Panc1 (cell line): ENCODE measurements at regions of chr7 and their contacts with region 1.

Region 1: DNA sequence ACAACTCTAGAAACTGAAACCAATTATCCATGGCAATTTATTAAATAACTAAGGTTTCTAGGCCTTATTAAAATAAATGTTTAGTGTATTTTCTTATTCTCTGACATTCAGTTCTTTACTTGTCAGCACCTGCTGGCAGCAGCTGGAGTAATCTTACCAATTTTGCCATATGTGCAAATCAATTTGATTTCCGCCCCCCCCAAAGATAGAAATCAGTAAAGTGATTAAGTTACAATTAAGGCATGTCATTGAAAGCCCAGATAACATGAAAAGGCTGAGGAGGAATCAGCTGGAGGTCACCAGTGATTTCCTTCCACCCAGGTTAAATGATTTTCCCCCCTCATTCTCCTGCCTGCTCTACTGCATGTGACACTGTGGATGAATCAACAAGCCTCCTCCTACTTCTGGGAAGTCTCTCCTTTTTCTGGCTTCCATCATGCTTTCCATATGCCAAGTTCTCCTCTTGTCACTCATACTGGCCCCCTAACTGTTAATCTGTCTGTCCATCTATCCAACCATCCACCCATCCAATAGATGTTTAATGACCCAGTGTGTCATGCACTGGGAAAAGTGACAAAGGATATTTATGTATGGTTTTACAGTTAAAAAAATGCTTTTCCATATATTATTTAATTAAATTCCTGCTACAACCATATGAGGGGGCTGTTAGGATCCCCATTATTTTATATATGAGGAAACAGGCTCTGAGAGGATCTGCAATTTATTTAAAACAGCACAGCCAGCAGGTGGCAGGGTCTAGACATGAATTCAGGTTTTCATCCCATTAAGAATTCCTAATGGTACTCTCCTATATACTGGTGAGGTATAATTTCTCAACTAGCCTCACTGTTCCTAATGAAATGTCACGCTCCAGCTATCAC is 116.5 kb downstream of the ATXN7L1 start:
- DNase-seq: no peak
- ATAC-seq: peak; percentile 82
- H3K4me3 ChIP-seq: no peak overlapping the region
- H3K27ac ChIP-seq: no peak overlapping the region
- H3K4me1 ChIP-seq: no peaks in the 10 kb centered on the region
- H3K27me3 ChIP-seq: no peaks in the 10 kb centered on the region
- CTCF ChIP-seq: peak; percentile 75

Region 2: GRCh38 chr7:105149827-105150226 is 610.1 kb before region 1 on chr7:
- CTCF ChIA-PET with region 1: no interaction called
- POLR2A ChIA-PET with region 1: no interaction called
- in situ Hi-C with region 1: no loop called
- intact Hi-C with region 1: no loop called
- DNase-seq: peak; percentile 86
- ATAC-seq: no peak
- H3K4me3 ChIP-seq: no peak overlapping the region
- H3K27ac ChIP-seq: no peak overlapping the region
- H3K4me1 ChIP-seq: no peaks in the 10 kb centered on the region
- H3K27me3 ChIP-seq: no peaks in the 10 kb centered on the region
- CTCF ChIP-seq: no peak

Region 3: DNA sequence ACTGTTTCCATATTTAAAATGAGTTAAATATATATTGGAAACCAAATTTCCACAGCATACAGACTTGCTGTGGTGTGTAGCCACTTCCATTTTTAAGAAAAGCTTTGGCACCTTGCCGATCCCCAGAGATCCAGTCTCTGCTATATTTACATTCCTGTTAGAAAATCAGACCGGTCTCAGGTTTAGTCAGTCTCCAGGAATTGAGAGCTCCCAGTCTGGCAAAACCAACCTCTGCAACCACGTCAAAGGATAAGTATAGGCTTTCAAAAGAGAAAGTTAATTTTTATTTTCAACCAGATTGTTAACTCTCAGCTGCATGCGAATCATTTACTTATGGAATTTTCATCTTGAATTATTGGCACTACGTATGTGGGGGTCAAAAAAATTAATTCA is 266.0 kb before region 1 on chr7:
- CTCF ChIA-PET with region 1: no interaction called
- POLR2A ChIA-PET with region 1: no interaction called
- in situ Hi-C with region 1: no loop called
- intact Hi-C with region 1: no loop called
- DNase-seq: no peak
- ATAC-seq: no peak; the same call in 1 of the 2 replicates
- H3K4me3 ChIP-seq: no peak overlapping the region
- H3K27ac ChIP-seq: no peak overlapping the region
- H3K4me1 ChIP-seq: no peaks in the 10 kb centered on the region
- H3K27me3 ChIP-seq: no peaks in the 10 kb centered on the region
- CTCF ChIP-seq: no peak

Region 4: DNA sequence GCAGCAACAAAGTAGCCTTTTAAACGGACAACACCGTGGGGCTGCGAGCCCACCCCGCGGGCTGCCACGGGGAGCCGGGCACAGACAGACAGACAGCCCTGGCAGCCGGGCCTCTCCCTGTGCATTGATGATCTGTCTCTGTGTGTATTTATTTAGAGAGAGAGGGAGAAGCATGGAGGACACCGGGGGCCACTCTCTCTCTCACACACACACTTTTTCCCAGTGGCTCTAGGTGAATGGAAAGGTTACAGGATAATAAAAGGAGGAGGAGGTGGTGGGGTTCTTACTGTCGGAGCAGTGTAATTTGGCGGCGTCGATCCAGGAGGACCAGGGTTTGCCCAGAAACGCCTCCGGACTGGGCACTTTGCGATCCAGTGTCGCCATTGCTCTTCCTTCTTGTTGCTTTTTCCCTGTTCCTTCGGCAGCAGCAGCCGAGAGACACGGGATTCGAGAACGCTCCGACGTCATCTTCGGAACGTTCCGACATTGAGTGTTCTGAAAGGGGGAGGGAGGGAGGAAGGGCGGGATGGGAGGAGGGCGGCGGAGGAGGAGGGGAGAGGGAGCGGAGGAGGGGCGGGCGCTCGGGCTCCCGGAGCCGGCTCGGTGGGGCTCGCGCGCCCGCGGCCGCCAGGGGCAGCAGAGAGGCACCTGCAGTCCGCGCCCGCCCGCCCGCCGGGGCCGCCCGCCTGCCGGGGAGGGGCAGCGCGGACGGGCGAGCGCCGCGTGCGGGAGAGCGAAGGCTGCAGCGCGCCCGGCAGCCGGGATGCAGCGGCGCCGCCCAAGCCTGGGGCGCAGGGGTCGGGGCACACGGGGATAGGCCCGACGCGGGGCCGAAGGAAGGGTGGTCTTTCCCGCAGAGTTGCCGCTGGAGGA is 116.4 kb after region 1 on chr7 and contains the start of gene ATXN7L1:
- CTCF ChIA-PET with region 1: interaction called, 3 read pairs
- POLR2A ChIA-PET with region 1: no interaction called
- in situ Hi-C with region 1: no loop called
- intact Hi-C with region 1: loop called (anchors 10 kb)
- DNase-seq: peak; percentile 88
- ATAC-seq: peak; percentile 92
- H3K4me3 ChIP-seq: peak within 1 kb of the TSS; percentile 88 to 98
- H3K27ac ChIP-seq: peak within 1 kb of the TSS; percentile 91
- H3K4me1 ChIP-seq: peaks cover 27% of the 10 kb centered on the region
- H3K27me3 ChIP-seq: no peaks in the 10 kb centered on the region
- CTCF ChIP-seq: peak; percentile 98
- total RNA-seq, gene ATXN7L1: 10.8 TPM

Region 5: DNA sequence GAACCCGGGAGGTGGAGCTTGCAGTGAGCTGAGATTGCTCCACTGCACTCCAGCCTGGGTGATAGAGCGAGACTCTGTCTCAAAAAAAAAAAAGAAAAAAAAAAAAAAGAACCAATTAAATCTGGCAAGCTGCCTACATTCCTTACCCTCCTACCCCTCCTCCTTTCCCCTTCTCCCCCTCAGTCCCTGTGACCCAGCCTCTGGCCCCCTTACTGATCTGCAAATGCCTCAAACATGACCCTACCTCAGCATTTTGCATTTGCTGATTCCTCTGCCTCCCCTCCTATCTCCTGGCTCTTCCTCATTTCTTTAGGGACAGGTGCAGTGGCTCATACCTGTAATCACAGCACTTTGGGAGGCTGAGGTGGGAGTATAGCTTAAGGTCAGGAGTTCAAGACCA is 222.5 kb after region 1 on chr7:
- CTCF ChIA-PET with region 1: interaction called, 10 read pairs
- POLR2A ChIA-PET with region 1: no interaction called
- in situ Hi-C with region 1: no loop called
- intact Hi-C with region 1: no loop called
- DNase-seq: no peak
- ATAC-seq: no peak
- H3K4me3 ChIP-seq: no peak overlapping the region
- H3K27ac ChIP-seq: no peak overlapping the region
- H3K4me1 ChIP-seq: no peaks in the 10 kb centered on the region
- H3K27me3 ChIP-seq: peaks cover 4% of the 10 kb centered on the region
- CTCF ChIP-seq: no peak

Region 6: GRCh38 chr7:106009403-106010226 is 249.7 kb after region 1 on chr7:
- CTCF ChIA-PET with region 1: interaction called, 3 read pairs
- POLR2A ChIA-PET with region 1: no interaction called
- in situ Hi-C with region 1: no loop called
- intact Hi-C with region 1: loop called (anchors 1 kb)
- DNase-seq: peak; percentile 35
- ATAC-seq: peak; percentile 98
- H3K4me3 ChIP-seq: peak overlapping the region in 1 of 2 experiments; percentile 19; a peak in 2 of 4 replicates
- H3K27ac ChIP-seq: no peak overlapping the region
- H3K4me1 ChIP-seq: no peaks in the 10 kb centered on the region
- H3K27me3 ChIP-seq: no peaks in the 10 kb centered on the region
- CTCF ChIP-seq: peak; percentile 97

Region 7: DNA sequence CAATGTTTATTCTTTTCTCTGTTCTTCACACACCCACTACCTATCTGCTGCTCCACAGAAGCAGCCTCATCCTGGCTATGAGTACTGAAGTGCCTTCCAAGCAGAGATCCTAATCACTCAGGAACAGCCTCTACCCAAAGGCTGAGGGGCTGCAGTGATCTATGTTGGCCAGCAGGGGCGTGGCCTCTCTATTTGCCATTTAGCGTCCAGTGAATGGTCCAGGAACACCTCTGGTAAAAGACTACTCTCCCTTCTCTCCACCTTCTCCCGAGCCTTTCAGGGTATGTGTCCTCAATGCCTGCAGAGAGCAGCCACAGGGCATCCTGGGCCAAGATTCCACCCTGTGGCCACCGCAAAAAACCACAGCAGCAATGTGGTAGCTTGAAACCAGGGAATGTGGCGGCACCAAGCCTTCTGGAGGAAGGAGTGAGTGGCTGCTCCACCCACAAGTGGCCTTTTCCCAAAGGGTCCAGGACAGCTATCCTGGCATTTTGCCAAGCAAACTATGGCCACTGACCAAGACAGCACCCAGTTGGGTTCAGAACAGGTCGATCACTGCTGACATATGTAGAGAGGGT is 281.3 kb after region 1 on chr7:
- CTCF ChIA-PET with region 1: interaction called, 5 read pairs
- POLR2A ChIA-PET with region 1: no interaction called
- in situ Hi-C with region 1: no loop called
- intact Hi-C with region 1: loop called (anchors 1 kb)
- DNase-seq: peak; percentile 43
- ATAC-seq: peak; percentile 71
- H3K4me3 ChIP-seq: no peak overlapping the region
- H3K27ac ChIP-seq: no peak overlapping the region
- H3K4me1 ChIP-seq: no peaks in the 10 kb centered on the region; the same call in 1 of the 2 replicates
- H3K27me3 ChIP-seq: no peaks in the 10 kb centered on the region; the same call in 1 of the 2 replicates
- CTCF ChIP-seq: peak; percentile 87